ENCODE measurements at regions of chr10 and their contacts with region 1.

Region 1: DNA sequence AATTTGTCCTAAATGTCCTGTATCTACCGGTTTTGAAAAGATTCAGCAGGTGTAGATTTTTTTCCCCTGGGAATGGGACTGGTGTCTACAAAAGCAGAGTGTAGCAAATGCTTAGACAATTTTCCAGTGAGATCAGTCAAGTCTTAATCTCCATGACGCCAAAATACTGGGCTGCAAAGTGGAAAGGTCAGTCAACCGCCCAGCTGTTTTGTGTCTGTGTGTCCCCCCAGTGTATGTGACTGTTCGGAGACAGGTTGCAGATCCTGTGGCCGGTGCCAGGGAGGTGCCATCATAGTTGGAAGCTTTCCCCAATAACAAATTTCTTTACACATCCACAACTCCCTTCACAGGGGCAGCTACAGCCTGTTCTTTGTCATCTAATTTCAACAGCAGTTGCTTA is 263.8 kb downstream of the ARHGAP12 start:
- DNase-seq: peak; percentile 91
- H3K4me3 ChIP-seq: no peak overlapping the region
- H3K27ac ChIP-seq: peak overlapping the region; percentile 22 to 90 (median 84)
- H3K4me1 ChIP-seq: peaks cover 2 to 77% (median 59%) of the 10 kb centered on the region in 4 donors
- H3K27me3 ChIP-seq: no peaks in the 10 kb centered on the region
- CTCF ChIP-seq: no peak
- EP300 ChIP-seq: peak; percentile 50 to 95 (median 82)
- POLR2A ChIP-seq: no peak

Region 2: GRCh38 chr10:30742471-30742870 is 922.3 kb before region 1 on chr10:
- intact Hi-C with region 1: loop called (anchors 5 kb)
- DNase-seq: no peak
- H3K4me3 ChIP-seq: no peak overlapping the region
- H3K27ac ChIP-seq: peak overlapping the region in 2 of 4 donors; percentile 79 to 83
- H3K4me1 ChIP-seq: peaks cover 0 to 35% (median 18%) of the 10 kb centered on the region in 4 donors
- H3K27me3 ChIP-seq: no peaks in the 10 kb centered on the region
- CTCF ChIP-seq: no peak
- EP300 ChIP-seq: no peak
- POLR2A ChIP-seq: no peak

Region 3: GRCh38 chr10:30803892-30804322 is 860.9 kb before region 1 on chr10:
- intact Hi-C with region 1: loop called (anchors 5 kb)
- DNase-seq: peak; percentile 90
- H3K4me3 ChIP-seq: no peak overlapping the region
- H3K27ac ChIP-seq: peak overlapping the region; percentile 64 to 94 (median 86)
- H3K4me1 ChIP-seq: peaks cover 3 to 50% (median 21%) of the 10 kb centered on the region in 4 donors
- H3K27me3 ChIP-seq: no peaks in the 10 kb centered on the region
- CTCF ChIP-seq: no peak
- EP300 ChIP-seq: peak in 1 of 4 donors; percentile 12
- POLR2A ChIP-seq: no peak

Region 4: GRCh38 chr10:31157123-31158010 is 507.4 kb before region 1 on chr10:
- intact Hi-C with region 1: no loop called
- DNase-seq: peak; percentile 81
- H3K4me3 ChIP-seq: peak overlapping the region in 1 of 4 donors; percentile 4
- H3K27ac ChIP-seq: peak overlapping the region; percentile 41 to 60 (median 54)
- H3K4me1 ChIP-seq: peaks cover 0 to 12% (median 9%) of the 10 kb centered on the region in 4 donors
- H3K27me3 ChIP-seq: no peaks in the 10 kb centered on the region
- CTCF ChIP-seq: no peak
- EP300 ChIP-seq: no peak
- POLR2A ChIP-seq: no peak

Region 5: GRCh38 chr10:31603235-31604087 is 61.3 kb before region 1 on chr10:
- intact Hi-C with region 1: loop called (anchors 2 kb)
- DNase-seq: peak; percentile 98
- H3K4me3 ChIP-seq: peak overlapping the region; percentile 40 to 74 (median 66)
- H3K27ac ChIP-seq: peak overlapping the region; percentile 86 to 93 (median 90)
- H3K4me1 ChIP-seq: peaks cover 0 to 58% (median 38%) of the 10 kb centered on the region in 4 donors
- H3K27me3 ChIP-seq: no peaks in the 10 kb centered on the region
- CTCF ChIP-seq: no peak
- EP300 ChIP-seq: peak in 1 of 4 donors; percentile 68
- POLR2A ChIP-seq: peak; percentile 36 to 74

Region 6: DNA sequence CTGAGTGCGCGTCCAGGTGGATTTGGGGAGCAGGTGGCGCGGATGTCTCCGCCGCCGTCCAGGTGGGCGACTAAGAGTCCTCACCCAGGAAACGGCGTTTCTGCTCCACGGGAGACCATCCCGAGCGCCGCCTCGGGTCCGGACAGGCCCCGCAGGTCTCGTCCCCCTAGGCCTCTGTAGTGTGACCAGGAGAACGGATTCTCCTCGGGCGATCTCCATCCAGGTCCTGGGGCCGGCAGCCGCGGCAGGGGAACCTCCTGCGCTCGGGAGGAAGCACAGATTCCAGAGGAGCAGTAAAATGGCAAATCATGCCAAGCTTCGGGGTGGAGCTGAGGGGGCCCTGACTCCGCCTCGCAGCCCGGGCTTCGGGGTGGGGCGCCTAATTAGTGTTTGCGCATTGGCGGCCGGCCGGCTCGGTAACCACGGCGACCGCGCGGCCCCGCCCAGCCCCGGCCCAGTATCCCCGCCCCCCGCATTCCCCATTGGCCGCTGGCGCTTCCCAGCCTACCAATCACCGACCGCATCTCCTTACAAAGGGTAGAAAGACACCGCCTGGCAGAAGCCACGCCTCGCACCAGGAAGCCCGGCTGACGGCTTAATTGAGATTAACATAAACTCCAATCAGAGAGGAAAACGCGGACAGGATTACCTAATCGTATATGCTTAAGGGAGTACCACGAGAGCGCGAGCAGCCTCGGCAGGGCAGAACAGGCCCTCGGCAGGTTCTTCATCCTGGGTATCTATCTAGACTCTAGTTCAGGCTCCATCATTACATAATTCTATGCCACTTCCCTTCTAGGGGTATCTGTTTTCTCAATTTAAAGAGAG is 95.2 kb after region 1 on chr10:
- intact Hi-C with region 1: loop called (anchors 2 kb)
- DNase-seq: peak; percentile 99
- H3K4me3 ChIP-seq: peak overlapping the region; percentile 56 to 96 (median 80)
- H3K27ac ChIP-seq: peak overlapping the region; percentile 93 to 99 (median 94)
- H3K4me1 ChIP-seq: peaks cover 0 to 49% (median 36%) of the 10 kb centered on the region in 4 donors
- H3K27me3 ChIP-seq: no peaks in the 10 kb centered on the region
- CTCF ChIP-seq: no peak
- EP300 ChIP-seq: no peak
- POLR2A ChIP-seq: peak; percentile 91 to 92

Region 7: DNA sequence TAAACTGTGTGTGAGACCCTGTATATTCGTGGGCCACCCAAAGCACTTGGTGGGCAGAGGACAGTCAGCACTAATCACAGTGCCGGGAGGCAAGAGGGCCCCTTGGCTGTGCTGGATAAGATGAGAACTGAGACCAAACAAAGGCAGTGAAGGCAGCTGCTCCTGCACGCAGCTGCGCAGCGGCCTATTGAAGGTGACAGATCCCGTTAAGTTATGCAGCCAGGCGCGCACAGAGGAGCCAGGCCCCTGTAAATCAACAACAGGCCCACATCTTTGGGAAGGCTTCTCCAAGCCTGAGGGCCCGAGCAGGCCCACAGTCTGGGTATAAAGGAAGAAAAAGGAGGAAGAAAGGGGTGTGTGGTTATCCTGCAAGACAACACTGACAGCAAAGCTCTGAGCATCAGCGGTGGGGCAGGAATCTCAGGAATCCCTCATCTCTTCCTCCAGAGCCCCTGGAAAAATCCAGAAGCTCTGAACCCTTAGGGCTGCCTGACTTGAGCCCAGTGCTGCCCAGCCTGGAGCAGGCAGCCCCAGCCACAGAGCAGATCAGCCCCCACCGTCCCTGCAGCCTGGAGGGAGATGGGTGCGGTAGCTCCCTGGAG is 109.6 kb after region 1 on chr10:
- intact Hi-C with region 1: no loop called
- DNase-seq: no peak
- H3K4me3 ChIP-seq: no peak overlapping the region
- H3K27ac ChIP-seq: peak overlapping the region in 2 of 4 donors; percentile 43 to 45
- H3K4me1 ChIP-seq: peaks cover 0 to 26% (median 18%) of the 10 kb centered on the region in 4 donors
- H3K27me3 ChIP-seq: no peaks in the 10 kb centered on the region
- CTCF ChIP-seq: no peak
- EP300 ChIP-seq: no peak
- POLR2A ChIP-seq: no peak

Measured in sigmoid colon (tissue), 7 donors.